Colonic mucosa (tissue), 4 donors: ENCODE measurements at regions of chr5 and their contacts with region 1.

Region 1: DNA sequence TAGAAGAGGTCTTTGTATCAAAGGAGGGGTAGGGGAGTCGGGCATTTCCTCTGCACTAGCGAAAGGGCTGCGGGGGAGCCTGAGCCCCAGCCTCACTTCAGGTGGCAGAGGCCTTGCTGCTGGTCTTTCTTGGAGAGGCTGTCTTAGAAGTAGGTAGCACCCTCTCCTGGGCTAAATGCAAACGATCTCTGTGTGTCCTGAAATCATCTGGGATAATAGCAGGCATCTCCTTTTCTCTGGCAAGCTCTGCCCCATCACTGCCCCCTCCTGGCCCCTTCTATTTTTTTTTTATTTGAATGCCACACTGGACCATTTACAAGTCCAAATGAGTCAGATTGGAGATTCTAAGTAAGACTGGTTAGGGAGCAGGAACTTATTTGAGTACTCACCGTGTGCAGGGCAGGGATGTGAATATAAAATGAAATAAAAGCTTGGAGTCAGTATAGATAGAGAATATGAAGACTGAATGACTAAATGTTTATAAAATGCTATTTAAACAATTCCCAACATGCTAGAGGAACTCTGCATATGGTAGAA is 137.1 kb downstream of the FGF1 start:
- DNase-seq: peak; percentile 65
- H3K4me3 ChIP-seq: no peak overlapping the region
- H3K27ac ChIP-seq: no peak overlapping the region
- H3K4me1 ChIP-seq: no peaks in the 10 kb centered on the region
- H3K27me3 ChIP-seq: no peaks in the 10 kb centered on the region
- CTCF ChIP-seq: peak; percentile 63

Region 2: DNA sequence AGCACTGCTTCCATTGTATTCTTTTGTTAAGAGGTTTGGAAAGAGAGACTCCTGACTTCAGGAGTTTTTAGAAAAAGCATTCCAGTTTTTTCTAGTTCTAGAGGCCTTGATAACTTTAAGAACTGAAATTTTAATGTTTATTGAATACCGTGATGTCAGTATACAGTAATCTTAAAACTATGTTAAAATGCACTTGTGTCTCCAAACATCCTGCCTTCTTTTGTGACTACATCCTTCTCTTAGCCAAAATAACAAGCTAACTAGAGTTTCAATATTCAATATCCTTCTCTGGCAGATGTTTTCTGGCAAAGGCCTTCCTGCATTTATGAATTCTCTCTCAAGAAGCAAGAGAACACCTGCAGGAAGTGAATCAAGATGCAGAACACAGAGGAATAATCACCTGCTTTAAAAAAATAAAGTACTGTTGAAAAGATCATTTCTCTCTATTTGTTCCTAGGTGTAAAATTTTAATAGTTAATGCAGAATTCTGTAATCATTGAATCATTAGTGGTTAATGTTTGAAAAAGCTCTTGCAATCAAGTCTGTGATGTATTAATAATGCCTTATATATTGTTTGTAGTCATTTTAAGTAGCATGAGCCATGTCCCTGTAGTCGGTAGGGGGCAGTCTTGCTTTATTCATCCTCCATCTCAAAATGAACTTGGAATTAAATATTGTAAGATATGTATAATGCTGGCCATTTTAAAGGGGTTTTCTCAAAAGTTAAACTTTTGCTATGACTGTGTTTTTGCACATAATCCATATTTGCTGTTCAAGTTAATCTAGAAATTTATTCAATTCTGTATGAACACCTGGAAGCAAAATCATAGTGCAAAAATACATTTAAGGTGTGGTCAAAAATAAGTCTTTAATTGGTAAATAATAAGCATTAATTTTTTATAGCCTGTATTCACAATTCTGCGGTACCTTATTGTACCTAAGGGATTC is 397.1 kb before region 1 on chr5:
- intact Hi-C with region 1: loop called (anchors 2 kb)
- DNase-seq: peak; percentile 67
- H3K4me3 ChIP-seq: no peak overlapping the region
- H3K27ac ChIP-seq: no peak overlapping the region
- H3K4me1 ChIP-seq: no peaks in the 10 kb centered on the region
- H3K27me3 ChIP-seq: no peaks in the 10 kb centered on the region
- CTCF ChIP-seq: peak; percentile 87

Region 3: DNA sequence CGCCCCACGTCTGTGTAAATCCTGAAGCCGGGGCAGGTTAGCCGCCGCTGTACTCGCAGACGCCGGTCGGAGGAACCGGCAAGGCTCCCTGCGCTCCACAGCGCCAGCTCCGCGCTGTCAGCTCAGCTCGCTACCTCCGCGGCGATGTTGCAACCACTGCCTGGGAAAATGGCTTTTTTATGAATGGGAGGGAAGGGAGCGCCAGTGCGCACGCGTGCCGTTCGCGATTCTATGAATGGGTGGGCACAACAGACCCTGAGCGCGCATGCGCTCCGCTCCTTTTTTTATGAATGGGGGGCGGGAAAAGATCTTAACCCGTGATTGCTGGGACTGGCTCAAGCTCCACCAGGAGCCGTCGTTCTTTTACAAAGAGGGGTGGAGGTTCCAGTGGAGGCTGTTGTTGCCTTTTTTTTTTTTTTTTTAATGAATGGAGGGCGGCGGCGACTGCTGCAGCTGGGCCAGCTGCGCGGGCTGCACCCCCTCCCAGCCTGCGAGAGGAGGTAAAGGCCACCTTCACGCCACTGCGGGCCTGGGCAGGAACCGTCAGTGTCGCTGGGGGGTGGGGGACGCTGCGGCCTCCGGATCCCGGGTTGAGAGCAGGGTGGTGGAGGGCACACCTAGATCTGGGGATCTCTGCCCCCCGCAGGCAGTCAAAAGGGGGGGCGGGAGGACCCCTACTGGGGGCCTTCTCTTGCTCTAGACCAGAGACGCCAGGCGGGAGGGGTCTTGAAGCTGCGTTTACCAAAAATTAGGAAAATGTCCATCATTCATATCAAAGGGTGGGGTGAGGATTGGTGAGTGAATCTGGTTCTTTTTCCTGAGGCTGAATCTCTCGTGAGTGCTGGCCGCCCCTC is 223.7 kb before region 1 on chr5 and contains the start of gene SPRY4:
- intact Hi-C with region 1: loop called (anchors 10 kb)
- DNase-seq: peak; percentile 94
- H3K4me3 ChIP-seq: peak within 1 kb of the TSS; percentile 77
- H3K27ac ChIP-seq: peak within 1 kb of the TSS; percentile 92
- H3K4me1 ChIP-seq: peaks cover 6% of the 10 kb centered on the region
- H3K27me3 ChIP-seq: no peaks in the 10 kb centered on the region
- CTCF ChIP-seq: no peak
- total RNA-seq, gene SPRY4: 8.4 to 21.5 TPM

Region 4: GRCh38 chr5:142432369-142432863 is 116.4 kb before region 1 on chr5:
- intact Hi-C with region 1: no loop called
- DNase-seq: peak; percentile 79
- H3K4me3 ChIP-seq: no peak overlapping the region
- H3K27ac ChIP-seq: peak overlapping the region; percentile 9
- H3K4me1 ChIP-seq: no peaks in the 10 kb centered on the region
- H3K27me3 ChIP-seq: no peaks in the 10 kb centered on the region
- CTCF ChIP-seq: no peak

Region 5: GRCh38 chr5:142881076-142881783 is 332.4 kb after region 1 on chr5:
- intact Hi-C with region 1: no loop called
- DNase-seq: no peak
- H3K4me3 ChIP-seq: no peak overlapping the region
- H3K27ac ChIP-seq: no peak overlapping the region
- H3K4me1 ChIP-seq: no peaks in the 10 kb centered on the region
- H3K27me3 ChIP-seq: no peaks in the 10 kb centered on the region
- CTCF ChIP-seq: no peak